ENCODE measurements at regions of chr5 and their contacts with region 1.

Region 1: DNA sequence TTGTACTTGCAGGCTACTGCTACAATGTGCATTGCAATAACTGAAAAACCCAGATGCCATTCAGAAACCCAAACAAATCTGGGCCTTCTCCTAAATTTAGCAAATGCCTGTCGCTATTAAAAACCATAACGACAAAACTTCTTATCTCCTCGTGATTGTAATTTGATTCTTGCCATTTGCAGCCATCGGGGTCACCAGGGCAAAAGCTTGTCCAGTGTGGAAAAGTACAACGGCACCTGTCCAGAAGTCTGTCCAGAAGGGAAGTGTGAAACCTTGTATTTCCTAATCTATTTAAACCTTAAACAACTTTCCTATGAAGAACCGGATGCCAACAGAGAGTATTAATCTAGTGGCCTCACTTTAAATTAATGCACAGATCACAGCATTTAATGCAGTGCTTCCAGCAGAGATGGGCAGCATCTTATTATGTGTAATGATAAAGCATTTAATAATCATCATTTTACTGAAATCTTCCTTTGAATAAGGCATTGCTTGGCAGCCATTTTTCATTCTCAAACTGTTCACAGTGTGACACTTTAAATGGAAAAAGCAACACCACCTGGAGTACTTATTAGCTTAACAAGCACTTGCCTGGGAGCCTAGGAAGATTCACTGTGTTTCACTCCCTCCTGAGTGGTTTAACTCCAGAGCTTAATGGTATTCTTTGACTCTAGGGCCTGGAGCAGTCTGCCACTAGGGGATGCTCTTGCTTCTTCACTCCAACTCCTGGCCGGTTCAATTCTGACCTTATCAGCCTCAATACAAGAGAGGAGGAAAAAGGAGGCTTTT is 4.9 kb upstream of the C7 start:
- DNase-seq: peak; percentile 74 to 87 (median 80)
- ATAC-seq: peak; percentile 95
- H3K4me3 ChIP-seq: no peak overlapping the region
- H3K27ac ChIP-seq: peak overlapping the region in 2 of 4 donors; percentile 27
- H3K4me1 ChIP-seq: peaks cover 19% of the 10 kb centered on the region
- H3K27me3 ChIP-seq: no peaks in the 10 kb centered on the region
- CTCF ChIP-seq: peak; percentile 82 to 96 (median 93)
- POLR2A ChIP-seq: no peak

Region 2: DNA sequence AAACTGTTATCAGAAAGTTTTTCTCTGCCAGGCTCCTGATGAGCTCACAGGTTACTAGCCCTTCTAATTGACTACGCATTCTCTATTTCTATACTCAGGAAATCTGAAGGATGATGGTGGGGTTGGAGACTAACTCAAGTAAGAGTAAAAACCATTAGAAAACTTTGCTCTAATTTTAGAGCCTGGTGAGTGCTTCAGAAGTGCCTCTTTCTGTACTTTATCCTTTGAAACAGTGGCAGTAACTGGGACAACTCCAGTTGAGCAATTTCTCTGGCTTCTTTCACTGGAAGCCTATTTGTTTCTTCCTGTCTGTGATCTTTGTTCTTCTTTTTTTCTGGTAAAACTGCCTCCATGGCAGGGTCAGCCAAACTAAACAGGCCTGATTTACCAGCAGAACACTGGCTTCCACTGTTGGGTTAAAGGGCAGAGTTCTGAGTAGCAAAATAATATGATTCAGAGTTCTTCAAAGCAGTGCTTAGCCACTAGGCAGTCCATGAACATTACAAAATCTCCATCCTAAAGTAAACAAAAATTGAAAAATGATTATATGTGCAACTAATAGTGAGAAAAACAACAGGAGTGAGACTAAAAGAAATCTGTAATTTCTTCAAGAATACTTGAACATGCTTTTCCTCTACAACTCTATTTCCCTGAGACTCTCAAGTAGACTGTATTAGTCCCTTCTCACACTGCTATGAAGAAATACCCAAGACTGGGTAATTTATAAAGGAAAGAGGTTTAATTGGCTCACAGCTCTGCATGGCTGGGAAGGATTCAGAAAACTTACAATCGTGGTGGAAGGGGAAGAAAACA is 87.0 kb after region 1 on chr5:
- intact Hi-C with region 1: no loop called
- DNase-seq: peak; percentile 26 to 73 (median 37)
- ATAC-seq: peak; percentile 86
- H3K4me3 ChIP-seq: no peak overlapping the region
- H3K27ac ChIP-seq: peak overlapping the region in 2 of 4 donors; percentile 49 to 56
- H3K4me1 ChIP-seq: peaks cover 29% of the 10 kb centered on the region
- H3K27me3 ChIP-seq: no peaks in the 10 kb centered on the region
- CTCF ChIP-seq: peak in 1 of 7 experiments; percentile 14
- POLR2A ChIP-seq: no peak

Region 3: GRCh38 chr5:41524174-41524573 is 619.8 kb after region 1 on chr5:
- intact Hi-C with region 1: loop called (anchors 10 kb)
- DNase-seq: no peak
- ATAC-seq: no peak
- H3K4me3 ChIP-seq: no peak overlapping the region
- H3K27ac ChIP-seq: no peak overlapping the region
- H3K4me1 ChIP-seq: no peaks in the 10 kb centered on the region
- H3K27me3 ChIP-seq: no peaks in the 10 kb centered on the region
- CTCF ChIP-seq: peak in 3 of 7 experiments; percentile 14 to 31 (median 25)
- POLR2A ChIP-seq: no peak

Measured in body of pancreas (tissue), 4 donors.